A549 (cell line): ENCODE measurements at regions of chr17 and their contacts with region 1.

Region 1: DNA sequence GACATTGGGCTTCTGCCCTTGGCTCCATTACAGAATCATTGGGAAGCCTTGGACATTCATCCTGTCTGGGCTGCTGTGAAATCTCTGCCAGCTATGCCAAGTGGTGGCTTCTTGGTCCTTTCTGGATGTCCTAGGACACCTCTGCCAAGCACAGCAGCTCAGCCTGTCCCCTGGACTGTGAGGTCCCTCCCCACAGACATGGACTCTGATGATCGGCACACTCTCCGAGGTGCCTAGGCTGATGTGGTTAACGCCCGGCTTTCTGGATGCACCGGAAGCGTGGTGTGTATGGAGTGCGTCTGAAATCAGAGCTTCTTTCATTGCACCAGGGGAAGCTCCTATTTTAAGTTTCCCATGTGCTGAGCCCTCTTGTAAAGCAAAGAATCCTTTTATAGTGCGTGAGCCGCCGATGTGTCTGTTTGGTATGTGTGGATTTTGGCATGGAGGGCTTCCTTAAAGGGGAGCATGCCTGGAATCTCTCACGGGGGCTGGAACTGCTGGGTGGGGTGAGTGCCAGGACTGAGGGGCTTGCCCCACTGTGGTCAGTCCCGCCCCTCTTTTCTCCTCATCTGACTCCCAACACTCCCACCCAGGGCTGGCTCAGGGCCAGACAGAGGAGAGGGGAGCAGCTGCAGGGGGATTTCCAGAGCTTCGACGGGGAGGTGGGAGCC is 7.0 kb upstream of the ARHGAP23 start:
- DNase-seq: no peak
- ATAC-seq: no peak
- H3K4me3 ChIP-seq: no peak overlapping the region
- H3K27ac ChIP-seq: no peak overlapping the region
- H3K4me1 ChIP-seq: no peaks in the 10 kb centered on the region
- CTCF ChIP-seq: no peak
- EP300 ChIP-seq: no peak
- POLR2A ChIP-seq: no peak
- RAD21 ChIP-seq: no peak

Region 2: GRCh38 chr17:38369124-38369886 is 52.0 kb before region 1 on chr17:
- CTCF ChIA-PET with region 1: no interaction called
- POLR2A ChIA-PET with region 1: no interaction called
- DNase-seq: no peak
- ATAC-seq: no peak
- H3K4me3 ChIP-seq: no peak overlapping the region
- H3K27ac ChIP-seq: no peak overlapping the region
- H3K4me1 ChIP-seq: no peaks in the 10 kb centered on the region
- CTCF ChIP-seq: no peak
- EP300 ChIP-seq: no peak
- POLR2A ChIP-seq: no peak
- RAD21 ChIP-seq: no peak

Region 3: DNA sequence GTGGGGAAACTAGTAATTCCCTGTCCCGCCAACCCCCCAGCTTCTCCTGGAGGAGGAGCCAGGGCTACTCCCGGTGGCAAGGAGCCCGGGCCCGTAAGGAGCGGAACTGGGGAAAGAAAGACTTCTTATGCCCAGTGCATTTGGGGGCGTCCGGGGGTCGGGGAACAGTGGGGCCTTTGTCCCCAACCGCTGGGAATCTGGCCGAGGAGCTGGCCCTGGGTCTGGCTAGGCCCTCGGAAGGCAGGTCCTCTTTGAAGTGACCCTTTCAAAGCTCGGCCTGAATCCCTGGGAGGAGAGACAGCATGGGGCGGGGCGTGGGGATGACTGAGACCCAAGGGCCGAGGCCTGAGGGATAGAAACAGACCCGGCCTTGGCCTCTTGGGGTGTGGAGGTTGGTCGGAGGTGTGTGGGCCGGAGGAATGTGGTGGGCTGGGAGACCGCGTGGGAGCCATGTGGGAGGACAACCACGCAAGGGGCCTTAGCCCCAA is 12.9 kb after region 1 on chr17:
- CTCF ChIA-PET with region 1: interaction called, 173 read pairs
- POLR2A ChIA-PET with region 1: no interaction called
- DNase-seq: no peak
- ATAC-seq: no peak
- H3K4me3 ChIP-seq: no peak overlapping the region
- H3K27ac ChIP-seq: no peak overlapping the region
- H3K4me1 ChIP-seq: peaks cover 18% of the 10 kb centered on the region
- CTCF ChIP-seq: no peak
- EP300 ChIP-seq: no peak
- POLR2A ChIP-seq: no peak
- RAD21 ChIP-seq: no peak

Region 4: GRCh38 chr17:38454516-38454915 is 33.2 kb after region 1 on chr17:
- CTCF ChIA-PET with region 1: interaction called, 23 read pairs
- POLR2A ChIA-PET with region 1: no interaction called
- DNase-seq: peak; percentile 79 to 97
- ATAC-seq: peak; percentile 65 to 84
- H3K4me3 ChIP-seq: peak overlapping the region; percentile 60
- H3K27ac ChIP-seq: peak overlapping the region; percentile 78 to 96
- H3K4me1 ChIP-seq: peaks cover 61% of the 10 kb centered on the region
- CTCF ChIP-seq: no peak
- EP300 ChIP-seq: no peak
- POLR2A ChIP-seq: no peak
- RAD21 ChIP-seq: no peak